ENCODE measurements at regions of chr14 and their contacts with region 1.

Region 1: GRCh38 chr14:68979021-68979782 is at the start of gene ACTN1:
- DNase-seq: peak; percentile 91 to 93
- H3K4me3 ChIP-seq: peak within 1 kb of the TSS; percentile 60 to 81 (median 76)
- H3K27ac ChIP-seq: peak within 1 kb of the TSS; percentile 61 to 93 (median 92)
- H3K4me1 ChIP-seq: peaks cover 12 to 31% of the 10 kb centered on the region in 2 donors
- H3K27me3 ChIP-seq: no peaks in the 10 kb centered on the region
- CTCF ChIP-seq: no peak
- POLR2A ChIP-seq: peak; percentile 72 to 78
- total RNA-seq, gene ACTN1: 48.1 to 90.4 (median 64.8) TPM

Region 2: DNA sequence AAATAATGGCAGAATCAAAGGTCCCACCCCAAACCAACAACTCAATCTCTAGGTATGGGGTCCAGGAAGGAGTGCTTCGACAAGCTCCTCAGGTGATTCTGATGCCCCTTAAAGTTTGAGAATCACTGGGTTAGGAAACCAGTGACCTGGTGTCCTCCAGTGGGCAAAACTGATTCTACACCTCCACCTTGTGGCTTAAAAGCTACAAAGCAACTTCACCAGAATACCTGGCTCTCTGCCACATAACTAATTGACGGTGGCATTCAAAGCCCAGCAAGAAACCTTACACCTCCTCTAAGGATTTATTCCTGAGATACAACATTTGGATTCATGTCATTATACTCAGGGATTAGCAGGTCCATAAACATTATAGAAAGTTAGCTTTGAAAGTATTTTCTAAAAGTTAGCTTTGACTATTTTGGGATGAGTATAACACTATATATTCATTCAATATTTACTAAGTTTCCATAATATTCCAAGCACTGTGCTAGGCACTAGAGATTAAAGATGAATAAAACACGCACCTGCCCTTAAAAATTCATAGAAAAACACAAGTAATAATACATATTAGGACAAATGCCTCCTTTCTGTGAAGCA is 128.3 kb after region 1 on chr14:
- intact Hi-C with region 1: loop called (anchors 10 kb)
- DNase-seq: peak; percentile 37 to 48
- H3K4me3 ChIP-seq: no peak overlapping the region
- H3K27ac ChIP-seq: no peak overlapping the region
- H3K4me1 ChIP-seq: no peaks in the 10 kb centered on the region
- H3K27me3 ChIP-seq: no peaks in the 10 kb centered on the region
- CTCF ChIP-seq: peak in 5 of 6 experiments; percentile 50 to 94 (median 76)
- POLR2A ChIP-seq: no peak

Region 3: GRCh38 chr14:69242311-69243224 is 263.4 kb after region 1 on chr14:
- intact Hi-C with region 1: no loop called
- DNase-seq: peak; percentile 61 to 67
- H3K4me3 ChIP-seq: no peak overlapping the region
- H3K27ac ChIP-seq: no peak overlapping the region
- H3K4me1 ChIP-seq: no peaks in the 10 kb centered on the region
- H3K27me3 ChIP-seq: no peaks in the 10 kb centered on the region
- CTCF ChIP-seq: peak; percentile 63 to 80 (median 76)
- POLR2A ChIP-seq: no peak